CD8-positive, alpha-beta T cell (primary cell): ENCODE measurements at regions of chr11 and their contacts with region 1.

Region 1: GRCh38 chr11:63838678-63839507 is at the start of gene MARK2:
- DNase-seq: peak; percentile 98 to 100 (median 100)
- ATAC-seq: peak; percentile 83
- H3K4me3 ChIP-seq: peak within 1 kb of the TSS; percentile 76 to 93
- H3K4me3 Mint-ChIP-seq: peak within 1 kb of the TSS; percentile 91
- H3K27ac ChIP-seq: peak within 1 kb of the TSS; percentile 75 to 77
- H3K27ac Mint-ChIP-seq: peak within 1 kb of the TSS; percentile 86
- H3K4me1 ChIP-seq: peaks cover 40% of the 10 kb centered on the region
- H3K4me1 Mint-ChIP-seq: peaks cover 55% of the 10 kb centered on the region
- H3K27me3 ChIP-seq: no peaks in the 10 kb centered on the region
- H3K27me3 Mint-ChIP-seq: no peaks in the 10 kb centered on the region
- CTCF ChIP-seq: no peak
- total RNA-seq, gene MARK2: 16.9 to 19.1 TPM

Region 2: GRCh38 chr11:63738720-63739360 is 100.1 kb before region 1 on chr11:
- CTCF ChIA-PET with region 1: no interaction called
- POLR2A ChIA-PET with region 1: no interaction called
- intact Hi-C with region 1: no loop called
- DNase-seq: peak; percentile 25 to 76 (median 66)
- ATAC-seq: no peak
- H3K4me3 ChIP-seq: no peak overlapping the region
- H3K4me3 Mint-ChIP-seq: no peak overlapping the region
- H3K27ac ChIP-seq: no peak overlapping the region
- H3K27ac Mint-ChIP-seq: no peak overlapping the region
- H3K4me1 ChIP-seq: no peaks in the 10 kb centered on the region
- H3K4me1 Mint-ChIP-seq: peaks cover 2% of the 10 kb centered on the region
- H3K27me3 ChIP-seq: no peaks in the 10 kb centered on the region
- H3K27me3 Mint-ChIP-seq: no peaks in the 10 kb centered on the region
- CTCF ChIP-seq: peak; percentile 100

Region 3: GRCh38 chr11:63813035-63813562 is 25.8 kb before region 1 on chr11 and contains the start of gene SPINDOC:
- CTCF ChIA-PET with region 1: interaction called, 11 read pairs
- POLR2A ChIA-PET with region 1: no interaction called
- intact Hi-C with region 1: no loop called
- DNase-seq: peak; percentile 29 to 83 (median 70)
- ATAC-seq: peak; percentile 88
- H3K4me3 ChIP-seq: peak within 1 kb of the TSS; percentile 80 to 92
- H3K4me3 Mint-ChIP-seq: peak within 1 kb of the TSS; percentile 79
- H3K27ac ChIP-seq: peak within 1 kb of the TSS; percentile 35 to 44
- H3K27ac Mint-ChIP-seq: peak within 1 kb of the TSS; percentile 22
- H3K4me1 ChIP-seq: peaks cover 12% of the 10 kb centered on the region
- H3K4me1 Mint-ChIP-seq: peaks cover 24% of the 10 kb centered on the region
- H3K27me3 ChIP-seq: no peaks in the 10 kb centered on the region
- H3K27me3 Mint-ChIP-seq: no peaks in the 10 kb centered on the region
- CTCF ChIP-seq: no peak
- total RNA-seq, gene SPINDOC: 4.0 to 4.1 TPM

Region 4: DNA sequence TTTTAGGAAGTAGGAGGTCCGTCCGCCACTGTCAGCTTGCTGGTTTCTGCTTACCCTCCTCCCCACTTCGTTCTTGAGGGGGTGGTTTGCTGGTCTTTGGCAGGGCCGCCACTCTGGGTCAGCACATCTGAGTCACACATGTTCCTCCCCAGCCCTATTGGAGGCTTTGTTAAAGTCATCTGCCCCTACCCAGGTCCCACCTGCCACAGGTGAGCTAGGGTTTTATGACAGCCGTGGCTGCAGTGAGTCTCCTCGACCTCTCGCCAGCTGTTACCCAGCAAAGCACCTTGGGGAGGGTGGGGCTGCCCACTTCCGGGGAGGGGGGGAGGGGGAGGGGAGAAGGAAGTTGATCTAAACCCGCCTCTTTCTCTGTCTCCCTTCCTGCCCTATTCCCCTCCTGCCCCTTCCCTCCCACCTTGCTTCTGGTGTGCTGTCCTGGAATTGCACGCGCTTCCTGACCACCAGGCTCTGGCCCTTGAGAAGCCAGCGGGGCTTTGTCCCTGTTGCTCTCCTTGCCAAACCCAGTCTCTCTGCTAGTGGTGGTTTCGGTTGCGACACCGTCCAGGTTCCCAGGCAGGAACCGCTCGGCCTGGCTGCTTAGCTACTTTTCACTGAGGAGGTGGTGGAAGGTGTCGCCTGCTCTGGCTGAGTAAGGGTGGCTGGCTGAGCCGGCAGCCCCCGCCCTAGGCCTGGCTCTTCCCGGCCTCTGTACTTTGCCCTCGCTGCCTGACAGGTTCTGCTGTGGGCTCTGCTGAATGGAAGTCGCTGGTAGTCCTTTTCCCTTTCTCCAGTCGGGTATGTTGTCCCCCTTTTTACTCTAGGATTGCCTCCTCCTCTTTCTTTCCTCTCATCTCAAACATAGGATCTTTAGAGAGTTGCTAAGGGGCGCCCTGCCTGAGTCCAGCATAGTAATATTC is 49.5 kb after region 1 on chr11:
- CTCF ChIA-PET with region 1: interaction called, 68 read pairs
- POLR2A ChIA-PET with region 1: interaction called, 17 read pairs
- intact Hi-C with region 1: loop called (anchors 1 kb)
- DNase-seq: peak; percentile 49 to 87 (median 76)
- ATAC-seq: peak; percentile 85
- H3K4me3 ChIP-seq: peak overlapping the region; percentile 67 to 72
- H3K4me3 Mint-ChIP-seq: peak overlapping the region; percentile 96
- H3K27ac ChIP-seq: peak overlapping the region; percentile 47 to 87
- H3K27ac Mint-ChIP-seq: peak overlapping the region; percentile 92
- H3K4me1 ChIP-seq: peaks cover 62% of the 10 kb centered on the region
- H3K4me1 Mint-ChIP-seq: peaks cover 83% of the 10 kb centered on the region
- H3K27me3 ChIP-seq: no peaks in the 10 kb centered on the region
- H3K27me3 Mint-ChIP-seq: no peaks in the 10 kb centered on the region
- CTCF ChIP-seq: no peak

Region 5: DNA sequence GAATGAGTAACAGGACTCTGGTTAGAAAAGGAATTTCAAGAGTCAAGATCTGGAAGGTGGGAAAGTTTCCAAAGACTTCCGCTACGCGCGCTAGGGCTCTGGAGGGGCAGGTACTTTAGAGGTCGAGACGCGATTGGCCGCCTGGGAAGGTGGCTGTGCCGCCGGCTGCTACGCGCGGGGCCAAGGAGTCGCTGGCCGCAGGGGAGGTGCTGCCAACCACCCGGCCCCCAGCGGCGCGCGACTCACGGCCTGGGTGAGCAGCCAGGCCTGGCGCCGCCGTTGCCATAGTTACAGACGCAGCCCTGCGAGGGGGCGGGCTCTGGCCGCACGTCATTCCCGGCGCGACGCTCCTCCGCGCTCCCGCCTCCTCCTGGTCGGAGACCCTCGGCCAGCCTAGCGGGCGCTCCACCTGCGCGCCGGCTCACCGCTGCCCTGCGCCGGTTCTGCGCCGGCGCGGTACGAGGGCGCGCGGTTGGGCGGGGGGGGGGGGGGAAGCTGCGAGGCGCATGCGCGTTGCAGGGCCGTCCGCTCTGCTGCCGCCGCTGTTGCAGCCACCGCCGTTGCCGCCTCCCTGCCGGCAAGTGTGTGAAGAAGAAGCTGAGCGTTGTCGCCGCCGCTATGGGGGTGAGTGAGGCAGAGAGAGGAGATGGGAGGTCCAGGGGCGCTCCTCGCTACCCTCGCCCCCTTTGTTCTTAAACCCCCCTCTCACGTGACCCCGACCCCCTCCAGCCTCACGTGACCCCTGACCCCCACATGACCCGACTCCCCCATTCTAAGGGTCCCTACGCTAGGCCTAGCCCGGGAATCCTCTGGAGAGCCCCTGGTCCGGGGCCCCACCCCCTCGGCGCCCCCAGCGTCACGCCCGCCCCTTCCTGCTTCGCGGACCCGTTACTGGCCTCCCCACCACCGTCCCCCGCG is 99.8 kb after region 1 on chr11 and contains the start of gene NAA40:
- CTCF ChIA-PET with region 1: interaction called, 337 read pairs
- POLR2A ChIA-PET with region 1: no interaction called
- intact Hi-C with region 1: loop called (anchors 1 kb)
- DNase-seq: peak; percentile 77 to 98 (median 90)
- ATAC-seq: peak; percentile 84
- H3K4me3 ChIP-seq: peak within 1 kb of the TSS; percentile 66 to 73
- H3K4me3 Mint-ChIP-seq: peak within 1 kb of the TSS; percentile 90
- H3K27ac ChIP-seq: peak within 1 kb of the TSS; percentile 49 to 78
- H3K27ac Mint-ChIP-seq: peak within 1 kb of the TSS; percentile 79
- H3K4me1 ChIP-seq: peaks cover 15% of the 10 kb centered on the region
- H3K4me1 Mint-ChIP-seq: peaks cover 29% of the 10 kb centered on the region
- H3K27me3 ChIP-seq: no peaks in the 10 kb centered on the region
- H3K27me3 Mint-ChIP-seq: no peaks in the 10 kb centered on the region
- CTCF ChIP-seq: no peak
- total RNA-seq, gene NAA40: 12.0 to 14.6 TPM

Region 6: DNA sequence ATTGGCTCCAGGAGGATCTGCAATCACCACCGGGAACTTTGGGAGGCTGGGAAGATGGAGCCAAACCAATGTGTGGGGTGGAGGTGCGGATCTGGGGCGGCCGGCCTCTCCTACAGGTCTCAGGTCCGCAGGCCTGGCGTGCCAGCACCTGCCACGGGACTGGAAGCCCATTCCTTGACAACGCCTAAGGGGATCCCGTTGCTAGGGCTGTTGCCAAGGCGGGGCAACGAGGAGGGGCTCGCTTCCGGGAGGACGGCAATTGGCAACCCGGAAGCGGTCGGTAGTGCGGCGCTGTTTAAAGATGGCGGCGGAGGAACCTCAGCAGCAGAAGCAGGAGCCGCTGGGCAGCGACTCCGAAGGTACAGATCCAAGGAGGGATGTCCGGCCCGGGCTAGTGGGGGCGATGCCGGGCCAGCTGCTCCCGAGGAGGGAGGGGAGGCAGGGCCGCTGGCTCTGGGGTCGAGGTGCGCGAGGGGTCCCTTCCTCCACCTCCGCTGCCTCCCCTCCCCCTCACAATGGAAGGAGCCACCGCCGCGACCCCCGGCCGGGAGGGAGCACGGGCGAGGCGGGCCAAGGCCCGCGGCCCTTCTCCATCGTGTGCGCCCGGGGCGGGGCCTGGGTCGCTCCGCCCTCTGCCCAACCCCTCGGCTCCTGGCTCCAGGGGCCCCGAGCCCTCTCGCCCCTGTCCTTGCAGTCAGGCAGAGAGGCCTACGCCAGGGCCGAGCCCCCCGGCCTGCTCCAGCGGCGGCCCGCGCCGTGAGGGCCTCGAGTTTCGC is 147.5 kb after region 1 on chr11 and contains the start of gene OTUB1:
- CTCF ChIA-PET with region 1: interaction called, 12 read pairs
- POLR2A ChIA-PET with region 1: interaction called, 5 read pairs
- intact Hi-C with region 1: loop called in 1 of 2 experiments (anchors 5 kb)
- DNase-seq: peak; percentile 61 to 93 (median 86)
- ATAC-seq: peak; percentile 85
- H3K4me3 ChIP-seq: peak within 1 kb of the TSS; percentile 65 to 93
- H3K4me3 Mint-ChIP-seq: peak within 1 kb of the TSS; percentile 98
- H3K27ac ChIP-seq: peak within 1 kb of the TSS; percentile 83 to 94
- H3K27ac Mint-ChIP-seq: peak within 1 kb of the TSS; percentile 97
- H3K4me1 ChIP-seq: peaks cover 22% of the 10 kb centered on the region
- H3K4me1 Mint-ChIP-seq: peaks cover 28% of the 10 kb centered on the region
- H3K27me3 ChIP-seq: no peaks in the 10 kb centered on the region
- H3K27me3 Mint-ChIP-seq: no peaks in the 10 kb centered on the region
- CTCF ChIP-seq: no peak
- total RNA-seq, gene OTUB1: 67.2 to 68.7 TPM

Region 7: GRCh38 chr11:64304316-64305072 is 465.6 kb after region 1 on chr11:
- CTCF ChIA-PET with region 1: no interaction called
- POLR2A ChIA-PET with region 1: no interaction called
- intact Hi-C with region 1: loop called in 1 of 2 experiments (anchors 10 kb)
- DNase-seq: peak; percentile 89 to 98 (median 94)
- ATAC-seq: peak; percentile 18
- H3K4me3 ChIP-seq: peak overlapping the region; percentile 80 to 99
- H3K4me3 Mint-ChIP-seq: peak overlapping the region; percentile 92
- H3K27ac ChIP-seq: peak overlapping the region; percentile 96 to 98
- H3K27ac Mint-ChIP-seq: peak overlapping the region; percentile 97
- H3K4me1 ChIP-seq: peaks cover 50% of the 10 kb centered on the region
- H3K4me1 Mint-ChIP-seq: peaks cover 41% of the 10 kb centered on the region
- H3K27me3 ChIP-seq: peaks cover 13 to 21% of the 10 kb centered on the region in 2 experiments
- H3K27me3 Mint-ChIP-seq: peaks cover 19% of the 10 kb centered on the region
- CTCF ChIP-seq: peak; percentile 90

Region 8: GRCh38 chr11:64545605-64546004 is 706.7 kb after region 1 on chr11:
- CTCF ChIA-PET with region 1: no interaction called
- POLR2A ChIA-PET with region 1: no interaction called
- intact Hi-C with region 1: no loop called
- DNase-seq: no peak
- ATAC-seq: no peak
- H3K4me3 ChIP-seq: no peak overlapping the region
- H3K4me3 Mint-ChIP-seq: no peak overlapping the region
- H3K27ac ChIP-seq: no peak overlapping the region
- H3K27ac Mint-ChIP-seq: no peak overlapping the region
- H3K4me1 ChIP-seq: no peaks in the 10 kb centered on the region
- H3K4me1 Mint-ChIP-seq: no peaks in the 10 kb centered on the region
- H3K27me3 ChIP-seq: no peaks in the 10 kb centered on the region
- H3K27me3 Mint-ChIP-seq: peaks cover 2% of the 10 kb centered on the region
- CTCF ChIP-seq: no peak